ENCODE measurements at regions of chr20 and their contacts with region 1.

Region 1: DNA sequence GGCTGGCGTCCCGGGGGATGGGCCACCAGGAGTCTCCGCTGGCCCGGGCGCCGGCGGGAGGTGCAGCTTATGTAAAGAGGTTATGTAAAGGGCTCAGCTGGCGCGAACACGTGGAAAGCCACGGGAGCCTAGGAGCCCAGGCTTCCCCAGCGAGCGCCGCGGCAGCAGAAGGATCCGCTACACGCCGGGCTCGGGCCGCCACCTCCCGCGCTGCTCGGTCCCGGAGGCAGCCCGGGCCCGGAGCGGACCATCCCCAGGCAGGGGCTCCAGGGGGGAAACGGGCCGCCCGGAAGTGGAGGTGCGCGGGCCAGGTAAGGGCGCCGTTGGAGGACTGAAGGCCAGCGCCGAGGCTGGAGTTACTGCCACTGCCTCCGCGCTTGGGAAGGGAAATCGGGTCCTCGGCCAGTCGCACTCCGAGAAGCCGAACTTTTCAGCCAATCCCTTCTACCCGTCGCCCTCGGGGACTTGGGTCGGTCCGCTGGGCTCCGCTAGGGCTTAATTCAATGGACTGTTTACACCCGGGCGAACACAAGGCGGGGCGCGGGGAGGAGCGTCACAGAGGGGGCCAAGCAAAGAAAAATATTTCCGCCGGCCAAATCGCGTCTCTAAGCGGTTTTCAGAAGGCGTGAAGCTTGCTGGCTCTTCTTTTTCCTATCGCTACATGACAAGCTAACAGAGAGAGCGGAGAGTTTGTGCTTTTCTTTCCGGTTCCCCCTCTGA is 398 bp downstream of the STK35 start:
- DNase-seq: peak; percentile 95
- H3K4me3 ChIP-seq: peak overlapping the region; percentile 93
- H3K27ac ChIP-seq: peak overlapping the region; percentile 85
- H3K4me1 ChIP-seq: peaks cover 26% of the 10 kb centered on the region
- CTCF ChIP-seq: no peak

Region 2: DNA sequence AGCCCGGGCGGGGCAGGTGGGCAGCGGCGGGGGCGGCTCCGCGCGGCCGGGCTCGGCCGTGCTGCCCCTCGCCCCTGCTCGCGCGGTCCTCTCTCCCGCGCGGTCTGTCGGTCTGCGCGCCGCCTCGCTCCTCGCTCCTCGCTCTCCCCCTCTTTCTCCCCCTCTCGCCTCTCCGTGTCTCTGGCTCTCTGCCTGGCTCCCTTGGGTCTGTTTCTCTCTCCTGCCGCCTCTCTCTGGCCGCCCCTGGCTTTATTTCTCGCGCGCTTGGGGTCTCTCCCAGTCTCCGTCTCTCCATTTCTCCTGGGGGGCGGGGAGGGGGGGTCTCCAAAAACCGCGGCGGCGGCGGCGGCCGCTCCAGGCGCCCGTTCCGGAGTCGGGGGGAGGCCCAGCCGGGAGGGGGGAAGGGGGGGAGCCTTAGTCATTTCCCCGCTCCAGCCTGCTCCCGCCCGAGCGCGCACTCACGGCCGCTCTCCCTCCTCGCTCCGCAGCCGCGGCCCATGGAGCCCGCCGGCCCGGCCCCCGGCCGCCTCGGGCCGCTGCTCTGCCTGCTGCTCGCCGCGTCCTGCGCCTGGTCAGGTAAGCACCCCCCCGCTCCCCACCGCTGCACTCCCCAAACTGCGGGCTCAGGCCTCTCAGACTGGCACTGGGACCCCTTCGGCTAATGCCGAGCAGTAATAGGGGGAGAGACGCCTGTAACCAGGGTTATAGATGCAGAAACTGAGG is 206.9 kb before region 1 on chr20 and contains the start of gene SIRPA:
- CTCF ChIA-PET with region 1: no interaction called
- POLR2A ChIA-PET with region 1: no interaction called
- intact Hi-C with region 1: loop called (anchors 5 kb)
- DNase-seq: no peak
- H3K4me3 ChIP-seq: no peak within 1 kb of the TSS
- H3K27ac ChIP-seq: no peak within 1 kb of the TSS
- H3K4me1 ChIP-seq: peaks cover 19% of the 10 kb centered on the region
- CTCF ChIP-seq: no peak
- total RNA-seq, gene SIRPA: not detected in 2 replicates

Region 3: DNA sequence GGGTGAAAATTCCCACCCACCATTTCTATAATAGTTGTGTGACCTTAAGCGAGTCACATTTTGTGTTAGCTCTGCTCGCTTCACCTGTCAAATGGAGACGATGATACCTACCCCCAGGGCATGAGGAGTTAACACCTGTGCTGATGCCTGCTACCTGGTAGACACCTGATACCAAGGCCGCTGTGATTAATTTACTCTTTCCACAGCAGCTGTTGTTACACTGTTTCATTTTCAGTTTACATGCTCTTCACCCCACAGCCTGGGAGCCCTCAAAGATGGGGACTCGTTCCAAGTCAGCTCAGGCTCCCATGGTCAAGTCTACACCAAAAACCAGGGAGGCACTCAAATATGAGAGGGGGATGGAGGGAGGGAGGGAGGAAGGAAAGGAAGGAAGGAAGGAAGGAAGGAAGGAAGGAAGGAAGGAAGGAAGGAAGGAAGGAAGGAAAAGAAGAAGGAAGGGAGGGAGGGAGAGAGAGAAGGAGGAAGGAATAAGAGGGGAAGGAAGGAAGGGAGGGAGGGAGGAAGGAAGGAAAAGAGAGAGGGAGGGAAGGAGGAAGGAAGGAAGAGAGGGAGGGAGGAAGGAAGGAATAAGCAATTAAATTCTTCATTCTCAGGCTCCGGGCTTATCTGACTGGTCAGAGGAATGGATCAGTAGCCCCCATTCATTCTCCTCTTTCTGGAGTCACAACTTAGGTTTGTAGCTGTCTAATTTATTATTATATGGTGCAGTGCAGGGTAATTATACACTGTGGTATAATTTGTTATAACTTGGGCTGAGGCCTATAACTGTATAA is 149.1 kb before region 1 on chr20:
- CTCF ChIA-PET with region 1: no interaction called
- POLR2A ChIA-PET with region 1: interaction called, 4 read pairs
- intact Hi-C with region 1: loop called (anchors 5 kb)
- DNase-seq: peak; percentile 53
- H3K4me3 ChIP-seq: peak overlapping the region; percentile 46
- H3K27ac ChIP-seq: peak overlapping the region; percentile 58
- H3K4me1 ChIP-seq: peaks cover 43% of the 10 kb centered on the region
- CTCF ChIP-seq: no peak

Region 4: GRCh38 chr20:2301164-2301622 is 199.2 kb after region 1 on chr20:
- CTCF ChIA-PET with region 1: no interaction called
- POLR2A ChIA-PET with region 1: no interaction called
- intact Hi-C with region 1: loop called (anchors 5 kb)
- DNase-seq: peak; percentile 79
- H3K4me3 ChIP-seq: no peak overlapping the region
- H3K27ac ChIP-seq: peak overlapping the region; percentile 13
- H3K4me1 ChIP-seq: peaks cover 14% of the 10 kb centered on the region
- CTCF ChIP-seq: no peak

Region 5: DNA sequence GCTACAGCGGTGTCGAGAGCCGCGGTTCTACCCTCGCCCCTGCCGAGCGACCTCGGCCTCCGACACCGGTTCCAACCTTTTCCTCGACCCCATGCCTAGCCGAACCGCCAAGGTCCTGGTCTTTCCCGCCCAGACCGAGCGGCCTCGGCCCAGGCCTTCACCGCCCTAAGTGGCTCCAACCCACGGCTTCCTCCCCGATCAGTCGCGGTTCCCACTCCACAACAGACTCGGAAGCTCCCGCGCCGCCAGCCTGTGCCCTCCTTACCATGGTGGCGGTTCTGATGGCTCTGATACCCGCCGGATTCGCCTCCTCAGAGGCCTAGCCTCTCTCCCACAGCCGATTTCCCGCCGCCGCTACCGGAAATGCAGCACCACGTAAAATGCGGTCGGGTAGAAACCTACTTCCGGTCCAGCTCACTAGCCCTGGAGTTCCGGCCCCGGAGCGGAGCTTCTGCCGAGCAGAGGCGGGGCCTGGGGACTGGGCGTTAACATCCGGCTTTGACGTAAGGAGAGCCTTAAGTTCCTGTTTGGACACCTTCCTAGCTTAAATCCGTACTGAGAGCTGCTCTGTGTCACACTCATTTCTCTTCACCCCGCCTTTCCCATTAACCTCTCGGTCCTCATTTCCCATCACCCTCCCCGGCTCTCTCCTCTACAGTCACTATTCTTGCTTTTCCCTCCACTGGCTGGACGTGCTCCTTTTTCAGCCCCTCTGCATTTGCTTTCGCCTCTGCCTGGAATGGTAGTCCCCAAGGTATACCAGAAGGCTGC is 368.6 kb after region 1 on chr20 and contains the start of gene SNRPB:
- CTCF ChIA-PET with region 1: no interaction called
- POLR2A ChIA-PET with region 1: no interaction called
- intact Hi-C with region 1: loop called (anchors 5 kb)
- DNase-seq: peak; percentile 99
- H3K4me3 ChIP-seq: peak within 1 kb of the TSS; percentile 99
- H3K27ac ChIP-seq: peak within 1 kb of the TSS; percentile 87
- H3K4me1 ChIP-seq: peaks cover 31% of the 10 kb centered on the region
- CTCF ChIP-seq: no peak
- total RNA-seq, gene SNRPB: 429 and 516 TPM in 2 replicates

Region 6: GRCh38 chr20:3795511-3796468 is 1693.8 kb after region 1 on chr20 and contains the start of gene CDC25B:
- CTCF ChIA-PET with region 1: no interaction called
- POLR2A ChIA-PET with region 1: no interaction called
- intact Hi-C with region 1: no loop called
- DNase-seq: peak; percentile 94
- H3K4me3 ChIP-seq: peak within 1 kb of the TSS; percentile 91
- H3K27ac ChIP-seq: peak within 1 kb of the TSS; percentile 83
- H3K4me1 ChIP-seq: peaks cover 46% of the 10 kb centered on the region
- CTCF ChIP-seq: peak; percentile 54
- total RNA-seq, gene CDC25B: 86.1 and 89.2 TPM in 2 replicates